Activated CD4-positive, alpha-beta memory T cell treated with anti-CD3 and anti-CD28 coated beads for 36 hours (primary cell): ENCODE measurements at regions of chr16 and their contacts with region 1.

Region 1: DNA sequence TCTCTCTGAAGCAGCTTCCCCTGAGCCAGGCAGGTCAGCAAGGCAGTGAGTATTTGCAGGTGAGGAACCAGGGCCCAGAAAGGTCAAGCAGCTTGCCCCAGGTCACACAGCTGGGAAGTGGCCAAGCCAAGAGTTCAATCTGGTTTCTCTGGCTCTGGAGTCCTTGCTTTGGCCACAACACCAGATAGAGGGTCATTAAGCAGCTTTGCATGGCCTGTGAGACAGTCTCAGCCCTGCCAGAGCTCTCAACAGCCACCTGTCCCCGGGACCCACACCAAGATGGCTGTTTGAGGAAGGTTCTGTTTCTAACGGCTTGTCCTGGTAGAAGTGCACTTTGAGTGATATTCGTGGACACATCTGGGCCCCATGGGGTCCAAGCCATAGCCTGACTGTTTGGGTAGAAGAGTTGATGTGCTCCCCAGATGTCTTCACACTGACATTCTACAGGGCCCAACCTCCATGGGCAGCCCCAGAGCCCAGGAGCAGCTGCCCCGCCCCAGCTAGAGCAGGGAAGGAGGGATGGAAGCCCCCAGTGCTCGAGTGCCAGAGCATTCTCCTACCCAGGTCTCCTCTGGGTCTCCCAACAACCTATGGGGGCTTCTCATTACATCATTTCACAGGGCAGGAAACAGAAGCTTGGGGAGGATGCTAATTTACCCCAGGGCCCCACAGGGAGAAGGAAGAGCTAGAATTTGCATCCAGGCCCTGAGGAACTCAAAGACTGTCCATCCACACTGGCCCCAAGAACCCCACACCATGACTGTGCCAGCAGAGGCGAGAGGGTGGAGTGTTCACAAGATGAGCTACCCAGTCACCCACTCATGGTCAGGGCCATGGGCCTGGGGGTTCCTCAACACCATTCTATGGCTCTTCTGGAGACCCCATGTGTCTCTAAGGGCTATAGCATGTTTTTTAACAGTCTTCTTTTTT is 107.3 kb upstream of the CDH5 start:
- DNase-seq: no peak
- H3K4me3 Mint-ChIP-seq: no peak overlapping the region
- H3K27ac Mint-ChIP-seq: no peak overlapping the region
- H3K4me1 Mint-ChIP-seq: no peaks in the 10 kb centered on the region
- H3K27me3 Mint-ChIP-seq: peaks cover 7% of the 10 kb centered on the region

Region 2: GRCh38 chr16:66247516-66248481 is 11.4 kb before region 1 on chr16:
- CTCF ChIA-PET with region 1: no interaction called
- POLR2A ChIA-PET with region 1: no interaction called
- intact Hi-C with region 1: no loop called
- DNase-seq: no peak
- H3K4me3 Mint-ChIP-seq: no peak overlapping the region
- H3K27ac Mint-ChIP-seq: no peak overlapping the region
- H3K4me1 Mint-ChIP-seq: no peaks in the 10 kb centered on the region
- H3K27me3 Mint-ChIP-seq: peaks cover 7% of the 10 kb centered on the region

Region 3: GRCh38 chr16:66270333-66270927 is 11.2 kb after region 1 on chr16:
- CTCF ChIA-PET with region 1: interaction called, 10 read pairs
- POLR2A ChIA-PET with region 1: no interaction called
- intact Hi-C with region 1: no loop called
- DNase-seq: peak; percentile 65
- H3K4me3 Mint-ChIP-seq: no peak overlapping the region
- H3K27ac Mint-ChIP-seq: no peak overlapping the region
- H3K4me1 Mint-ChIP-seq: peaks cover 11% of the 10 kb centered on the region
- H3K27me3 Mint-ChIP-seq: peaks cover 20% of the 10 kb centered on the region